Esophagus squamous epithelium (tissue), 5 donors: ENCODE measurements at regions of chrX and their contacts with region 1.

Region 1: GRCh38 chrX:138745196-138745595 is 33.7 kb upstream of the FGF13 start:
- DNase-seq: no peak
- H3K4me3 ChIP-seq: no peak overlapping the region
- H3K27ac ChIP-seq: no peak overlapping the region
- H3K4me1 ChIP-seq: no peaks in the 10 kb centered on the region
- H3K27me3 ChIP-seq: no peaks in the 10 kb centered on the region
- CTCF ChIP-seq: peak; percentile 31 to 76 (median 58)
- POLR2A ChIP-seq: no peak

Region 2: GRCh38 chrX:138001226-138001625 is 744.0 kb before region 1 on chrX:
- intact Hi-C with region 1: no loop called
- DNase-seq: no peak
- H3K4me3 ChIP-seq: no peak overlapping the region
- H3K27ac ChIP-seq: no peak overlapping the region
- H3K4me1 ChIP-seq: no peaks in the 10 kb centered on the region
- H3K27me3 ChIP-seq: no peaks in the 10 kb centered on the region
- CTCF ChIP-seq: no peak
- POLR2A ChIP-seq: no peak

Region 3: DNA sequence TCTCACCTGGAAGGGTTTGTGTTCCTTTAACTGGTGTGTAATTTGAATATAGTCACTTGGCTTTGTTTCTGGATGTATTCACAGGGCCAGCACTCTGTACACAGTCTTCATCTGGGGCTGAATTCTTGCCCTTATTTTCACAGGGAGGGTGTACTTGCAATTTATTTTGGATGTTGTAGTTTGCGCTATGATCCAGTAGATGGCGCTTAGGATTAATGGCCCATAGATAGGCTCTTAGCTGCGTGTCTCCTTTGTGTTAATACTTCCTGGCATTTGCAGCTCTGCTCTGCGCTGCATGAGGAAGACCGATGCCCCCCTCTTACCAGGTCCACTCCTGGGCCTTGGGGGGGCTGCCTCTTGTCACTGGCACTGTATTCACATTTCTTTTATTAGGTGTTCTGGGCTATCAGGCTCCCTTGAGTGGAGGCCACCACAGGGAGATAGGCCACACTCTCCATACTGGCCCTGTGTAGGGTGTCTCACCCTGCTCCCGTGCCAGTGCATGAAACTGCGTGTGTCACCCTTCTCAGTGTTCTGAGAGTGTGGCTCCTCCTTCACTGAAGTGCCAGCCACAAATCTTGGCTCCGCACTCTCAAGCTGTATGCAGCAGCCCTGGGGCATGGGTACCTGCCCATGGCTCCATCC is 617.0 kb before region 1 on chrX:
- intact Hi-C with region 1: loop called (anchors 10 kb)
- DNase-seq: no peak
- H3K4me3 ChIP-seq: no peak overlapping the region
- H3K27ac ChIP-seq: no peak overlapping the region
- H3K4me1 ChIP-seq: no peaks in the 10 kb centered on the region
- H3K27me3 ChIP-seq: no peaks in the 10 kb centered on the region
- CTCF ChIP-seq: peak in 5 of 6 experiments; percentile 25 to 62 (median 40)
- POLR2A ChIP-seq: no peak

Region 4: GRCh38 chrX:138191998-138192397 is 553.2 kb before region 1 on chrX:
- intact Hi-C with region 1: loop called (anchors 10 kb)
- DNase-seq: no peak
- H3K4me3 ChIP-seq: no peak overlapping the region
- H3K27ac ChIP-seq: no peak overlapping the region
- H3K4me1 ChIP-seq: no peaks in the 10 kb centered on the region
- H3K27me3 ChIP-seq: no peaks in the 10 kb centered on the region
- CTCF ChIP-seq: peak in 3 of 6 experiments; percentile 15 to 20 (median 19)
- POLR2A ChIP-seq: no peak

Region 5: DNA sequence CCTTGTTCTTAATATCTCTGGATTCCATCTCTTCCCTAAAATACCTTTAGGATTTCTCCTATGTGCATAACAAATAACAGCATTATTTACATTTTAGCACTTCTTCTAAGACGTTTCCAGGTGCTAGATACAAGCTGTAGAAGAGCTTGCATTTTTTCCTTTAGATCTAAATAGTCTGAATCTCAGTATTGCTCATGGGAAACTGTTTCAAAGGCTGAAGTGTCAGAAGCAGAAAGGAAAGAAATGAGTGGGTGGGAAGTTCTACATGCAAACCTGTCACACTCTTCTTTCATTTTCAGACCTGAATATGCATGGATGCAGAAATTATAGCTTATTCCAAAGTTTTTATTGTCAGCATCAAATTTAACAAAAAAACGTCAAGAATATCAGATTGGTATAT is 75.5 kb before region 1 on chrX:
- intact Hi-C with region 1: no loop called
- DNase-seq: no peak
- H3K4me3 ChIP-seq: no peak overlapping the region
- H3K27ac ChIP-seq: no peak overlapping the region
- H3K4me1 ChIP-seq: no peaks in the 10 kb centered on the region
- H3K27me3 ChIP-seq: no peaks in the 10 kb centered on the region
- CTCF ChIP-seq: no peak
- POLR2A ChIP-seq: no peak

Region 6: DNA sequence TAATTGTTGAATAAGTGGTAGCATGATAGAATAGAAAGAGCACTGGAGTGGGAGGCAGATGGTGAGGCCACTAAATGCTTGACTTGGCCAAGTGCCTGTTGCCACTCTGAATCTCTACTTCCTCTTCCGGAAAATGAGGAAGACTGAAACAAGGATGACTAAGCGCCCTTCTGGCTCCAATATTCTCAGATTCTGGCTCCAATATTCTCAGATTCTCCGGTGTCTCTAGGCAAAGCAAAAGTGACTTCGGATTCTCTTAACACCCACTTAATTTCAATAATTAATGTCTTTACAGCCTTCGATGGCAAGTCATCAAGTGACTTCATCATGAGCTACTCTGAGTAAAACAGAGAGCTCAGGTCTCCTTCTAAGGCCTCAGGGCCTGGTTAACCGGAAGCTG is 368.5 kb after region 1 on chrX:
- intact Hi-C with region 1: no loop called
- DNase-seq: no peak
- H3K4me3 ChIP-seq: no peak overlapping the region
- H3K27ac ChIP-seq: no peak overlapping the region
- H3K4me1 ChIP-seq: peaks cover 0 to 17% (median 0%) of the 10 kb centered on the region in 3 donors
- H3K27me3 ChIP-seq: peaks cover 0 to 4% (median 0%) of the 10 kb centered on the region in 4 donors
- CTCF ChIP-seq: no peak
- POLR2A ChIP-seq: no peak